CD4-positive, alpha-beta memory T cell (primary cell): ENCODE measurements at regions of chr9 and their contacts with region 1.

Region 1: GRCh38 chr9:137086531-137087408 is at the start of gene MAN1B1:
- DNase-seq: peak; percentile 98 to 100 (median 100)
- H3K4me3 ChIP-seq: peak within 1 kb of the TSS; percentile 81 to 82
- H3K4me3 Mint-ChIP-seq: peak within 1 kb of the TSS; percentile 88 to 93 (median 90)
- H3K27ac ChIP-seq: peak within 1 kb of the TSS; percentile 92
- H3K27ac Mint-ChIP-seq: peak within 1 kb of the TSS; percentile 90 to 99 (median 96)
- H3K4me1 ChIP-seq: peaks cover 29% of the 10 kb centered on the region
- H3K4me1 Mint-ChIP-seq: peaks cover 17 to 37% (median 28%) of the 10 kb centered on the region in 4 donors
- H3K27me3 ChIP-seq: no peaks in the 10 kb centered on the region
- H3K27me3 Mint-ChIP-seq: no peaks in the 10 kb centered on the region
- total RNA-seq, gene MAN1B1: 63.3 to 71.0 TPM

Region 2: GRCh38 chr9:136807281-136808074 is 279.3 kb before region 1 on chr9 and contains the start of gene RABL6:
- CTCF ChIA-PET with region 1: no interaction called
- POLR2A ChIA-PET with region 1: interaction called, 10 read pairs
- intact Hi-C with region 1: no loop called
- DNase-seq: peak; percentile 78 to 90 (median 86)
- H3K4me3 ChIP-seq: peak within 1 kb of the TSS; percentile 61 to 74
- H3K4me3 Mint-ChIP-seq: peak within 1 kb of the TSS; percentile 87 to 93 (median 90)
- H3K27ac ChIP-seq: peak within 1 kb of the TSS; percentile 83
- H3K27ac Mint-ChIP-seq: peak within 1 kb of the TSS; percentile 91 to 96 (median 94)
- H3K4me1 ChIP-seq: peaks cover 40% of the 10 kb centered on the region
- H3K4me1 Mint-ChIP-seq: peaks cover 11 to 45% (median 30%) of the 10 kb centered on the region in 4 donors
- H3K27me3 ChIP-seq: no peaks in the 10 kb centered on the region
- H3K27me3 Mint-ChIP-seq: no peaks in the 10 kb centered on the region
- total RNA-seq, gene RABL6: 65.1 to 70.9 TPM

Region 3: DNA sequence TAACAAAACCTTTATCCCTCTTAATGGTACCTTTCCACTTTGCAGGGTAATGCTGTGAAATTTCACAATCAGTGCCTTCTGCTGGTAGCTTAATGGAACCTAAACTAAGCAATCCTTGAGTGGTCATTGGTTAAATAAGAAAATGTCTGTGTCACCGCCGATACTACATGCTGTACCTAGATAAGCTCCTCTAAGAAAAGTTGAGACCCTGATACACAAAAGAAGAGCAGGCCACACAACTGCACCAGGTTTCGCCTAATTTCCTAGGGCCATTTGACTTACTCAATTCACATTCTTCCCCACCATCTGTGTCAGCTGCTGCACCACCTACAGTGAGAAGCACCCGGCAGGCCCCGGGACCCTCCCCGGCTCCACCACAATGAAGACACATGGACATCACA is 211.6 kb before region 1 on chr9:
- CTCF ChIA-PET with region 1: no interaction called
- POLR2A ChIA-PET with region 1: no interaction called
- intact Hi-C with region 1: no loop called
- DNase-seq: no peak
- H3K4me3 ChIP-seq: no peak overlapping the region
- H3K4me3 Mint-ChIP-seq: no peak overlapping the region
- H3K27ac ChIP-seq: no peak overlapping the region
- H3K27ac Mint-ChIP-seq: peak overlapping the region in 1 of 7 donors; percentile 60
- H3K4me1 ChIP-seq: no peaks in the 10 kb centered on the region
- H3K4me1 Mint-ChIP-seq: no peaks in the 10 kb centered on the region
- H3K27me3 ChIP-seq: no peaks in the 10 kb centered on the region
- H3K27me3 Mint-ChIP-seq: no peaks in the 10 kb centered on the region

Region 4: DNA sequence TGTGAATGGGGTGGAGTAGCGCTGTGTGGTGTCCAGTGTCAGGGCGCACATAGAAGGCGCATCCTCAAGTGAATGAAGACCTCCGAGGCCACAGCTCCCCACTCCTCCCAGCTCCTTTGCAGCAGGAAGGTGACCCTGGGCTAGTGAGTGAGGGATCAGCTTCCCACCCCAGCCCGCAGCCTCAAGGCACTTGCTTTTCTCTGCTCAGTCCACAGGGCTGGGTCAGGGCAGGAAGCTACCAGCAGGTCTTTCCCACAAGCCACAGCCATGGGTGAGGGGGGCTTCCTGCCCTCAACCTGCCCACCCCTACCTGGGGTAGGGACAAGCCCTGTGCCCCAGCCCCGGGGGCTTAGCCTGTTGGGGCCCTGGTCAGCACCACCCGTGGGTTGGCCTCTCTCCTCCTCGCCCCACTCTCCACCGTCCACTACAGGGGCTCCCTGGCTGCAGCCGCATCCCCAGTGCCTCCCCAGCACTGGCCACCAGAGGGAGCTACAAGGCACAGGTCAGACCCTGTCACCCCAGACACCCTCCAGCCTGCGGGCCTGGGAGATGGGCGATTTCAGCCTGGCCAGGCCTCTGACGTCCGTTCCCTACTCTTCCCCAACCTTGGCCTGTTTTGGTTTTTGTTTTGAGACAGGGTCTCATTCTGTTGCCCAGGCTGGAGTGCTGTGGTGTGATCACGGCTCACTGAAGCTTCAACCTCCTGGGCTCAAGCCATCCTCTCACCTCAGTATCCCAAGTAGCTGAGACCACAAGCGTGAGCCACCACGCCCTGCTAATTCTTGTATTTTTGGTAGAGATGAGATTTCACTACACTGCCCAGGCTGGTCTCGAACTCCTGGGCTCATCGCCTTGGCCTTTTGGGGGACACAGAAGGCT is 57.5 kb before region 1 on chr9:
- CTCF ChIA-PET with region 1: interaction called, 8 read pairs
- POLR2A ChIA-PET with region 1: interaction called, 15 read pairs
- intact Hi-C with region 1: no loop called
- DNase-seq: peak; percentile 58 to 74 (median 64)
- H3K4me3 ChIP-seq: peak overlapping the region; percentile 65 to 75
- H3K4me3 Mint-ChIP-seq: peak overlapping the region; percentile 87 to 96 (median 90)
- H3K27ac ChIP-seq: peak overlapping the region; percentile 68
- H3K27ac Mint-ChIP-seq: peak overlapping the region; percentile 70 to 92 (median 85)
- H3K4me1 ChIP-seq: peaks cover 80% of the 10 kb centered on the region
- H3K4me1 Mint-ChIP-seq: peaks cover 20 to 58% (median 39%) of the 10 kb centered on the region in 4 donors
- H3K27me3 ChIP-seq: no peaks in the 10 kb centered on the region
- H3K27me3 Mint-ChIP-seq: no peaks in the 10 kb centered on the region

Region 5: DNA sequence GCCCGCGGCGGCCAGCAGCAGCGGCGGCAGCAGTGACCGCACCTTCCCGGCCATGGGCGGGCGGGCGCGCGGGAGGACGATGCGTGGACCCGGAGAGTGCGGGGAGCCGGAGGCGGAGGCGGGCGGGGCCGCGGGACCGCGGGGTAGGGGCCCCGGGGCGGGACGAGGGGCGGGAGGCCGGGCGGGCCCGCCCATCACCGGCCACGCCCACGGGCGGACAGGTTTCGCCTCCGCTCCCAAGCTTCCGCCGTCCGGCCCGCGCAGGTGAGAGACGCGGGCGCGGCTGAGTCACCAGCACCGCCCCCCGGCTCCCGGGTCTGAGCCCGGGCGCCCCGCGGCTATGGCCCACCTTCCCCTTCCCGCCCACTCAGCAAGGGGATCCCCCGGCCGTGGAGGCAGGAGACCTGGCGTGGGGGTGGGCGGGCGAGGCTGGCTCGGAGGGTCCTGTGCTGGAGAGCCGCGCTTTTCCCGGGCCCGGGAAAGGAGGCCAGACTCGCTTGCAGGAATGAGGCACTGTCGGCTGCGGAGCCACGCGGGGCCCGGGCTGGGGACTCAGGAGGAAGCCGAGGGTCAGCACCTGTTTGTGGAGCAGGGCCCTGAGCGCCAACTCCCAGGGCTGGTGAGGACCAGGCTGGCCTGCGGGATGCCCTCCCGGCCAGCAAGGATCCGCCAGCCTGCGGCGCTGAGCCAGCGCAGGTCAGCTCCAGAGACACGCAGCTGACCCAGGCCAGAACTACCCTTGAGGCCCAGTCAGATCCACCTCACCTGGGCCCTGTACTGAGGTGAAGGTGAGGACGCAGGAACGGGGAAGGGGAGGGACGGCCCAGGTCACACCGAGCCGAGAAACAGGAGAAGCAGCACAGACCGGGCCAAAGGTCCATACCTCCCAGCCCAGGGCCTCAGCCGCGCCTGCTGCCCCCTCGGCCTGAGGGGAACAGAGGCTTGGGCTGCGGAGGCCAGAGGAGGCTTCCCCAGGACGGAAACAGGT is 32.5 kb before region 1 on chr9 and contains the start of gene ENTPD2:
- CTCF ChIA-PET with region 1: no interaction called
- POLR2A ChIA-PET with region 1: no interaction called
- intact Hi-C with region 1: no loop called
- DNase-seq: peak in 1 of 5 donors; percentile 52
- H3K4me3 ChIP-seq: no peak within 1 kb of the TSS
- H3K4me3 Mint-ChIP-seq: peak within 1 kb of the TSS in 1 of 8 donors; percentile 12
- H3K27ac ChIP-seq: no peak within 1 kb of the TSS
- H3K27ac Mint-ChIP-seq: no peak within 1 kb of the TSS
- H3K4me1 ChIP-seq: peaks cover 15% of the 10 kb centered on the region
- H3K4me1 Mint-ChIP-seq: peaks cover 0 to 5% (median 3%) of the 10 kb centered on the region in 4 donors
- H3K27me3 ChIP-seq: peaks cover 32% of the 10 kb centered on the region
- H3K27me3 Mint-ChIP-seq: peaks cover 9 to 10% of the 10 kb centered on the region in 2 donors
- total RNA-seq, gene ENTPD2: not detected

Region 6: GRCh38 chr9:137108608-137109249 is 22.0 kb after region 1 on chr9:
- CTCF ChIA-PET with region 1: no interaction called
- POLR2A ChIA-PET with region 1: interaction called, 11 read pairs
- intact Hi-C with region 1: no loop called
- DNase-seq: no peak
- H3K4me3 ChIP-seq: no peak overlapping the region
- H3K4me3 Mint-ChIP-seq: no peak overlapping the region
- H3K27ac ChIP-seq: no peak overlapping the region
- H3K27ac Mint-ChIP-seq: no peak overlapping the region
- H3K4me1 ChIP-seq: peaks cover 7% of the 10 kb centered on the region
- H3K4me1 Mint-ChIP-seq: peaks cover 0 to 9% (median 2%) of the 10 kb centered on the region in 4 donors
- H3K27me3 ChIP-seq: no peaks in the 10 kb centered on the region
- H3K27me3 Mint-ChIP-seq: no peaks in the 10 kb centered on the region

Region 7: GRCh38 chr9:137188490-137189296 is 101.9 kb after region 1 on chr9 and contains the starts of genes ANAPC2 and SSNA1:
- CTCF ChIA-PET with region 1: no interaction called
- POLR2A ChIA-PET with region 1: interaction called, 17 read pairs
- intact Hi-C with region 1: loop called (anchors 2 kb)
- DNase-seq: peak; percentile 84 to 96 (median 92)
- H3K4me3 ChIP-seq: peak within 1 kb of the TSS; percentile 81 to 90
- H3K4me3 Mint-ChIP-seq: peak within 1 kb of the TSS; percentile 91 to 97 (median 94)
- H3K27ac ChIP-seq: peak within 1 kb of the TSS; percentile 96
- H3K27ac Mint-ChIP-seq: peak within 1 kb of the TSS; percentile 91 to 98 (median 96)
- H3K4me1 ChIP-seq: peaks cover 41% of the 10 kb centered on the region
- H3K4me1 Mint-ChIP-seq: peaks cover 22 to 62% (median 33%) of the 10 kb centered on the region in 4 donors
- H3K27me3 ChIP-seq: no peaks in the 10 kb centered on the region
- H3K27me3 Mint-ChIP-seq: no peaks in the 10 kb centered on the region
- total RNA-seq, gene ANAPC2: 116 to 125 TPM
- total RNA-seq, gene SSNA1: 48.6 to 49.5 TPM

Region 8: DNA sequence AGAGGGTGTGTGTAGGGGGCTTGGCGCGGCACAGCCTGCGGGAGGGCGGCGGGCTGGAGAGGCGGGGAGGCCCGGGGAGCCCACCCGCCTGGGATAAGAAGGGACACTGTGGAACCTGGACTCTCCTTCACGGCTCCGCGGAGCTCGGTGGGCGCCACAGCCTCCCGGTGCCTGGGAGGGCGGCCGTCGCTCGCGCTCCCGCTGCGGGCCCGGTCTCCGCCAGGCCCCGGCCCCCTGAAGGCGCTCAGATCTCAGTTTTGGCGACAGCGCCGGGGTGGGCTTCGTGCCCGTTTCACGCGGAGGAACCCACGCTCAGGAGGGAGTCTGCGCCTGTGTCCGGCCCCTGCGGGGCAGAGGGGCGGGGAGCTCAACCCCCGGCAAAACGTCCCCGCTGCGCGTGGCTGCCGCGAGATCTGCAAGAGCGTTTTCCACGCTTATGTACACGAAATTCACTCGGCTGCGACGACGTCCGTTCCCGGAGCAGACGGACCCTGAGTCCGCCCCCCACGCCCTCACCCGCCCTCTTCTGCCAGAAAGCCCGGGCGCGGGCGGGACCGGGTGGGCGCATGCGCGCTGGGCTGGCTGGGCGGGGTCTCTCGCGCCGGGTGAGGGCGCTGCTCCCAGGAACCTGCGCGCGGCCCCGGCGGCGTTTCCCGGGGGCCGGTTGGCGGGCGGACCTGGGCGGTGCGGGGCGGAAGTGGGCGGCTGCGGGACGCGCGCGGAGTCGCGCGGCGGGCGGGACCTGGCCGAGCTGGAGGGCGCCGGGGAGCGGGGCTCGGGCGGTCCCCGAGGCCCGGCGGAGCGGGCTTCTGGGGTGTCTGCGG is 168.1 kb after region 1 on chr9 and contains the start of gene NELFB:
- CTCF ChIA-PET with region 1: no interaction called
- POLR2A ChIA-PET with region 1: interaction called, 5 read pairs
- intact Hi-C with region 1: loop called (anchors 1 kb)
- DNase-seq: peak; percentile 89 to 98 (median 94)
- H3K4me3 ChIP-seq: peak within 1 kb of the TSS; percentile 66 to 81
- H3K4me3 Mint-ChIP-seq: peak within 1 kb of the TSS; percentile 88 to 94 (median 92)
- H3K27ac ChIP-seq: peak within 1 kb of the TSS; percentile 69
- H3K27ac Mint-ChIP-seq: peak within 1 kb of the TSS; percentile 43 to 92 (median 77)
- H3K4me1 ChIP-seq: peaks cover 25% of the 10 kb centered on the region
- H3K4me1 Mint-ChIP-seq: peaks cover 2 to 24% (median 10%) of the 10 kb centered on the region in 4 donors
- H3K27me3 ChIP-seq: no peaks in the 10 kb centered on the region
- H3K27me3 Mint-ChIP-seq: no peaks in the 10 kb centered on the region
- total RNA-seq, gene NELFB: 44.3 to 44.9 TPM